Activated B cell treated with CpG ODN at 0.5 μM for 24 hours (primary cell): ENCODE measurements at regions of chr11 and their contacts with region 1.

Region 1: GRCh38 chr11:33970984-33971466 is 79.1 kb upstream of the LMO2 start:
- DNase-seq: no peak
- ATAC-seq: peak; percentile 87
- H3K4me3 Mint-ChIP-seq: no peak overlapping the region
- H3K27ac Mint-ChIP-seq: no peak overlapping the region
- H3K4me1 Mint-ChIP-seq: peaks cover 5% of the 10 kb centered on the region
- H3K27me3 Mint-ChIP-seq: peaks cover 4% of the 10 kb centered on the region
- CTCF ChIP-seq: no peak

Region 2: DNA sequence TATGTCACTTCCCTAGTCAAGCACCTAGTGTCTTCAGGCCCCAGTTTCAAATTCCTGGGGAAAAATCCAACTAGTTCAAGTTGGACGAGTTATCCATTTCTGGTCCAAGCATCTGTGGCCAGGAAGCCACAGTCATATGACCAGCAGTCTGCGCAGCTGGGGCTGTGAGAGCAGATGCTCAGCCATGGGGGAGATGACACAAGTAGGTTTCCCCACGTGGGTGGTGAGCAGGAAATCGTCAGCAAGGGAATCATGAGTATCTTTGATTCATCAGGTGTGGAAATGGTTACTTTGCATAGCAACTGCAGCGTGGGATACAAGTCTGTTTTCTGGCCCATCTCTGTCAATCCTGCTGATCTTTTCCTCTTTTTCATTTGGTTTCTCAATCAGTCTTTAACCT is 455.7 kb before region 1 on chr11:
- CTCF ChIA-PET with region 1: no interaction called
- POLR2A ChIA-PET with region 1: no interaction called
- intact Hi-C with region 1: no loop called
- DNase-seq: no peak
- ATAC-seq: no peak
- H3K4me3 Mint-ChIP-seq: no peak overlapping the region
- H3K27ac Mint-ChIP-seq: no peak overlapping the region
- H3K4me1 Mint-ChIP-seq: no peaks in the 10 kb centered on the region
- H3K27me3 Mint-ChIP-seq: peaks cover 13% of the 10 kb centered on the region
- CTCF ChIP-seq: no peak

Region 3: GRCh38 chr11:33808228-33808828 is 162.7 kb before region 1 on chr11:
- CTCF ChIA-PET with region 1: interaction called, 35 read pairs
- POLR2A ChIA-PET with region 1: no interaction called
- intact Hi-C with region 1: loop called (anchors 1 kb)
- DNase-seq: peak; percentile 76
- ATAC-seq: peak; percentile 91
- H3K4me3 Mint-ChIP-seq: no peak overlapping the region
- H3K27ac Mint-ChIP-seq: no peak overlapping the region
- H3K4me1 Mint-ChIP-seq: no peaks in the 10 kb centered on the region
- H3K27me3 Mint-ChIP-seq: peaks cover 6% of the 10 kb centered on the region
- CTCF ChIP-seq: peak; percentile 95

Region 4: GRCh38 chr11:33857933-33858371 is 113.1 kb before region 1 on chr11:
- CTCF ChIA-PET with region 1: interaction called, 99 read pairs
- POLR2A ChIA-PET with region 1: interaction called, 4 read pairs
- intact Hi-C with region 1: loop called (anchors 1 kb)
- DNase-seq: peak; percentile 65
- ATAC-seq: peak; percentile 98
- H3K4me3 Mint-ChIP-seq: no peak overlapping the region
- H3K27ac Mint-ChIP-seq: no peak overlapping the region
- H3K4me1 Mint-ChIP-seq: peaks cover 8% of the 10 kb centered on the region
- H3K27me3 Mint-ChIP-seq: no peaks in the 10 kb centered on the region
- CTCF ChIP-seq: peak; percentile 39

Region 5: DNA sequence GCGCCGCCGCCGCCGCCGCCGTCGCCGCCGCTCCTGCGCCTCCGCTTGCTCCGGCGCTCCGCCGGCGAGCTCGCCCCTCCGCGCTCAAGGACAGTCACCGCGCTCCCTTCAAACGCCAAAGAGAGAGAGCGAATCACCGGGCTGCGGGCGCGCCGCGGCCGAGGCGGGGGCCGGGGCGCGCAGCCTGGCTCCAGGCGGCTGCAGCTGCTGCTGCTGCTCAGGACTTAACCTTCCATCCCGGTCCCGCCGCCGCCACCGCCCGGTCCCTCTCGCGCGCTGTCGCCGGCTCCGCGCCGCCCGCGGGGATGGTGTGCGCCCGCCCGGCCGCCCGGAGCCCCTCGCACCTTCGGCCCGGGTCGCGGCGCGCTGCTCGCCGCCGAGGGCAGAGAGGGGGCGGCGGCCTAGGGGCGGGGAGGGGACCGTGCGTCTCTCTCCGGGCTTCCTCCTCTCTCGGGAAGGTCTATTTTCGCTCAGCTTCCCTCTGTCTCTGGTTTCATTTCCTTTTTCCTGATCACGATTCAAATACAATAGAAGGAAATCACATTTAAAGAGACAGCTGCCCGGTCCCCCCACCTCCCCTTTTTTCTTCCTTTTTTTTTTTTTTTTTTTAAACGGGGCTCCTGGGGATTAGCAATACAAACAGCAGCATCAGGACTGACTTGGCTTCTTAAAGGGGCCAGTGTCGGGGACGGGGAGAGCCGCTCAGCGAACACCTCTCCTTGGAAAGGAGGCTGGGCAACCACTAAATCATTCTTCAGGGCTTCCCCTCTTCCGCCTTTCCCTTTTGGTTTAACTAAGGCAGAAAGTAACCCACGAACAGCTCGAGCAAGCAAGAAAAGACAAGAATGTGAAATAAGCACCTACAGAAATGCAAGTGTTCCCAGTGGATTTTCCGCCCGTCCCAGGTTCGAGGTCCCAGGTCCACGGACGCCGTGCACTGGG is 101.3 kb before region 1 on chr11:
- CTCF ChIA-PET with region 1: interaction called, 32 read pairs
- POLR2A ChIA-PET with region 1: interaction called, 5 read pairs
- intact Hi-C with region 1: no loop called
- DNase-seq: peak; percentile 57
- ATAC-seq: peak; percentile 72
- H3K4me3 Mint-ChIP-seq: peak overlapping the region; percentile 92
- H3K27ac Mint-ChIP-seq: peak overlapping the region; percentile 74
- H3K4me1 Mint-ChIP-seq: peaks cover 36% of the 10 kb centered on the region
- H3K27me3 Mint-ChIP-seq: no peaks in the 10 kb centered on the region
- CTCF ChIP-seq: no peak

Region 6: GRCh38 chr11:33920838-33921613 is 50.0 kb before region 1 on chr11:
- CTCF ChIA-PET with region 1: interaction called, 5 read pairs
- POLR2A ChIA-PET with region 1: interaction called, 3 read pairs
- intact Hi-C with region 1: loop called (anchors 1 kb)
- DNase-seq: peak; percentile 44
- ATAC-seq: peak; percentile 97
- H3K4me3 Mint-ChIP-seq: peak overlapping the region; percentile 47
- H3K27ac Mint-ChIP-seq: peak overlapping the region; percentile 70
- H3K4me1 Mint-ChIP-seq: peaks cover 26% of the 10 kb centered on the region
- H3K27me3 Mint-ChIP-seq: peaks cover 28% of the 10 kb centered on the region
- CTCF ChIP-seq: no peak

Region 7: GRCh38 chr11:34028425-34028824 is 57.4 kb after region 1 on chr11:
- CTCF ChIA-PET with region 1: no interaction called
- POLR2A ChIA-PET with region 1: no interaction called
- intact Hi-C with region 1: no loop called
- DNase-seq: no peak
- ATAC-seq: no peak
- H3K4me3 Mint-ChIP-seq: no peak overlapping the region
- H3K27ac Mint-ChIP-seq: no peak overlapping the region
- H3K4me1 Mint-ChIP-seq: no peaks in the 10 kb centered on the region
- H3K27me3 Mint-ChIP-seq: no peaks in the 10 kb centered on the region
- CTCF ChIP-seq: no peak